Endothelial cell of umbilical vein (primary cell): ENCODE measurements at regions of chr5 and their contacts with region 1.

Region 1: DNA sequence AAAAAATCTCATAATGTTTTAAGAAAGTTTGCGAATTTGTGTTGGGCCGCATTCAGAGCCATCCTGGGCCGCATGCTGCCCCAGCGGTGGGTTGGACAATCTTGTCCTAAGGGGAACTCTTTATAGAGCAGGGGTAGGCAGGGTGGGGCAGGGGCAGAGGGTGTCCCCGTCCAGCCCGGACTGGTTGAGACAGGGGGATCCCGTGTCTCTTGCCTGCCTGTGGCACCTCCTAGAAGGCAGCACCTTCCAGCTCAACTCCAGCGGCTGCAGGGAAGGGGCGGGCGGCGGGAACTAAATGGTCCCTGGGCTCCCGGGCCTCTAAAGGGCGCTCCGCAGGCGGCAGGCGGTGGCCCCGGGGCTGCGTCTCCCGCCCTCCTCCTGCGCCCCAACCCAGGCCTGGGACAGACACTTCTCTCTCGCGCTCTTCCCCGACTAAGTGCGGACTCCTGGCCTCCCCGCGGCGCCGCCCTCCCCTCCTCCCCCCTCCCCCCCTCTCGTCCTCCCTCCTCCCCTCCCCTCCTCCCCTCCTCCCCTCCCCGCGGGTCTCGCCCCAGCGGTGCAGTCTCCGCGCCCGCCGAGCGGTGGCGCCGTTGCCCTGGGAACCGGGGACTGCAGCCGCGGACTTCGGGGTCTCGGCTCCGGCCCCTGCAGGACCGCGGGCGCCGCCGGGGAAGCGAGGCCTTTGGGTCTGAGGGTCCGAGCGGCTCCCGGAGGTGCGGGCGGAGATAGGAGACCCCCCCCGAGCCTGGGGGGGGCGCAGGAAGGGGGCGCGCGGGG is 132.6 kb downstream of the MRPL36 start:
- DNase-seq: no peak
- H3K4me3 ChIP-seq: no peak overlapping the region
- H3K27ac ChIP-seq: no peak overlapping the region
- H3K4me1 ChIP-seq: no peaks in the 10 kb centered on the region
- H3K27me3 ChIP-seq: peaks cover 18 to 21% of the 10 kb centered on the region in 2 experiments
- CTCF ChIP-seq: peak; percentile 11 to 46
- POLR2A ChIP-seq: no peak

Region 2: GRCh38 chr5:1068204-1068894 is 598.7 kb before region 1 on chr5:
- CTCF ChIA-PET with region 1: no interaction called
- POLR2A ChIA-PET with region 1: no interaction called
- dilution Hi-C with region 1: no loop called
- intact Hi-C with region 1: no loop called
- DNase-seq: no peak
- H3K4me3 ChIP-seq: no peak overlapping the region
- H3K27ac ChIP-seq: no peak overlapping the region
- H3K4me1 ChIP-seq: no peaks in the 10 kb centered on the region
- H3K27me3 ChIP-seq: no peaks in the 10 kb centered on the region
- CTCF ChIP-seq: no peak
- POLR2A ChIP-seq: no peak

Region 3: GRCh38 chr5:1125030-1125357 is 542.0 kb before region 1 on chr5:
- CTCF ChIA-PET with region 1: no interaction called
- POLR2A ChIA-PET with region 1: no interaction called
- dilution Hi-C with region 1: no loop called
- intact Hi-C with region 1: no loop called
- DNase-seq: no peak
- H3K4me3 ChIP-seq: no peak overlapping the region
- H3K27ac ChIP-seq: no peak overlapping the region
- H3K4me1 ChIP-seq: no peaks in the 10 kb centered on the region
- H3K27me3 ChIP-seq: no peaks in the 10 kb centered on the region
- CTCF ChIP-seq: no peak
- POLR2A ChIP-seq: no peak

Region 4: GRCh38 chr5:1503241-1504068 is 163.5 kb before region 1 on chr5:
- CTCF ChIA-PET with region 1: no interaction called
- POLR2A ChIA-PET with region 1: no interaction called
- dilution Hi-C with region 1: no loop called
- intact Hi-C with region 1: no loop called
- DNase-seq: peak; percentile 24
- H3K4me3 ChIP-seq: no peak overlapping the region
- H3K27ac ChIP-seq: no peak overlapping the region
- H3K4me1 ChIP-seq: no peaks in the 10 kb centered on the region
- H3K27me3 ChIP-seq: no peaks in the 10 kb centered on the region
- CTCF ChIP-seq: no peak
- POLR2A ChIP-seq: no peak

Region 5: GRCh38 chr5:2017540-2018389 is 350.8 kb after region 1 on chr5:
- CTCF ChIA-PET with region 1: no interaction called
- POLR2A ChIA-PET with region 1: no interaction called
- dilution Hi-C with region 1: no loop called
- intact Hi-C with region 1: loop called (anchors 5 kb)
- DNase-seq: peak; percentile 14
- H3K4me3 ChIP-seq: no peak overlapping the region
- H3K27ac ChIP-seq: no peak overlapping the region
- H3K4me1 ChIP-seq: no peaks in the 10 kb centered on the region
- H3K27me3 ChIP-seq: no peaks in the 10 kb centered on the region
- CTCF ChIP-seq: peak; percentile 51 to 53
- POLR2A ChIP-seq: no peak

Region 6: GRCh38 chr5:2125171-2125900 is 458.3 kb after region 1 on chr5:
- CTCF ChIA-PET with region 1: no interaction called
- POLR2A ChIA-PET with region 1: no interaction called
- dilution Hi-C with region 1: no loop called
- intact Hi-C with region 1: no loop called
- DNase-seq: no peak
- H3K4me3 ChIP-seq: no peak overlapping the region
- H3K27ac ChIP-seq: no peak overlapping the region
- H3K4me1 ChIP-seq: no peaks in the 10 kb centered on the region
- H3K27me3 ChIP-seq: no peaks in the 10 kb centered on the region
- CTCF ChIP-seq: no peak
- POLR2A ChIP-seq: no peak